G401 (cell line): ENCODE measurements at regions of chr3 and their contacts with region 1.

Region 1: DNA sequence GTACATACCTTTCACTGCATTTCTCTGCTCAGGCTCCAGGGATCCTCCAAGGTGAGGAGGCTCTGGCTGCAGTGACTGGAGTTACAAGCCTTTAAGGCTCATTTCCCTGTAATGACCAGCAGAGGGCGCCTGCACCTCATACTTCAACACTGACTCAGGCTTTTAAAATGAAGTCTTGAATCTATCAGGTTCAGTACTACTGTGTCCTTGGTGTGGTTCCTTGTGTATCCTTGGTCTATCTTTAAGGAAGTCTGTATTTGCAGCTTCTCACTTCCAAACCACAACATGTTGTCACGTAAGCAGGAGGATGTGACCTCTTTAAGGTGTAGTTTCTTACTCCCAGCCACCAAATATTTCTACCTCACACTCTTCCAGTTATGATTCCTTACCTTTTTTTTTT is 122.5 kb upstream of the ZBED2 start:
- DNase-seq: peak; percentile 87

Region 2: GRCh38 chr3:111761309-111761831 is 43.8 kb after region 1 on chr3:
- in situ Hi-C with region 1: no loop called
- DNase-seq: no peak

Region 3: DNA sequence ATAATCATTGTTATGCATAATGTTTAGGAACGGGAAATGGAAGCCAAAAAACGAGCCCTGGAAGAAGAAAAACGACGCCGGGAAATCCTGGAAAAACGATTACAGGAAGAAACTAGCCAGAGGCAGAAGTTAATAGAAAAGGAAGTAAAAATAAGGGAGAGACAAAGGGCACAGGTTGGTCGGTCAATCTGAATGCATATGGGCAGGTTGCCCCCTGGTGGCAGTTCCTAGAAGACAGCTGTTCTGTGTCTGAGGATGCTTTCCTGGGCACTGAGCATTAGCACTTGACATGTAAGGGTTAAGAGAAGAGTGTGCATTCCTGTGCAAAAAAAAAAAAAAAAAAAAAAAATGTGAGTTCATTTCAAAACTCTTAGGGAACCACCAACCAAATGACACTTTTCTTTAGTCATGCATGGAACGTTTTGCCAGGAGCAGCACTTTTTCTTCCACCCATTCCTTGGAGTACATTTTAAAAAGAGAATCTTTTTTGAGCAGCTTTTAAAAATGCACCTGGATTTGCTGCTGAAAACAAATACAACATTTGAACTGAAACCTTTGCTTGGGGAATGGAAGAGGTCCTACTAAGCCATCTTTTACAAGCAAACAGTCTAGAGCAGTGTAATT is 250.2 kb after region 1 on chr3:
- in situ Hi-C with region 1: loop called (anchors 10 kb)
- DNase-seq: peak; percentile 82